ENCODE measurements at regions of chr12 and their contacts with region 1.

Region 1: DNA sequence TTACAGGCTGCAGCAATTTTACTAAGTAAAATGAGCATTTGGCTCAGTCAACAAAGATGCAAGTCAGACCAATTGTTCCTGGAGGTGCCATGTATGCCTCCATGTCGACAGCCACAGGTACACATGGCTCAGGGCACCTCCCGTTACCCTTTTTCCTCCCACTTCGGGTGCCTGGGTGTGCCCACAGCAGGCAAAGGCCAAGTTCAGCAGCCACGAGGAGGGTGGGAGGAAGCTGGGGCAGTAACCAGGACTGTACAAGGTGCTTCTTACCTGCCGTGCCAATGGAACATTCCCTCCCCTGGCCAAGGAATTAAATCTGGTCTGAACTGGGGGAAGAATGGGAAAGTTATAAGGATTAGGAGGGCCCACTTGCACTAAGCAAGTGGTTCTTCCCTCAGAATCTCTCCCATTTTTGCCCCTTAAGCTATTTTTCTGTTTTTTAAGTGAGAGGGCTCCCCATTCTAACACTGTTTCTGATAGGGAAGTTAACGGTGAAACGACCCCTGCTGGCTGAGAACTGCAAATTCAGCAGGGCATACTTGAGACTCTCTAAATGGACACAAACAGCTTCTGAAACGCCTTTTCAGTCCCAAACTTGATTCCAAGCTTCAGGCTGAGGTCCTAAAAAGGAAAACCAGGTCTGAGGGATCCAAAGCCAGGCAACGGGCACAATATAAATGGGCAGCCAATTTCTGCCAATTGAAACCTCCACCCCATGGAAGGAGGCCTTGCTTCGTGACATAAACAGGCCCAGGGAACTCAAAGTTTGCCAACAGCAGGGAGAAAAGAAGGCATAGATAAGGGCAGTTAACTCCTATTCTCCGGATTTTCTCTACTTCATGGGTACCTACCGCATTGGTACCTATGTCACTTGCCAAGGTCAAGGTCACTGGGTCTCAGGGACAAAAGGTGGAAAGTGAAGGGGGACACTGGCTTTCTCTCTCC is 24.8 kb downstream of the CLECL1 start:
- DNase-seq: peak; percentile 72 to 75 (median 74)
- H3K4me3 ChIP-seq: peak overlapping the region; percentile 4 to 29
- H3K4me3 Mint-ChIP-seq: peak overlapping the region; percentile 60 to 82 (median 77)
- H3K27ac ChIP-seq: peak overlapping the region; percentile 66
- H3K27ac Mint-ChIP-seq: peak overlapping the region; percentile 87 to 97 (median 96)
- H3K4me1 ChIP-seq: peaks cover 44% of the 10 kb centered on the region
- H3K4me1 Mint-ChIP-seq: peaks cover 47 to 59% (median 49%) of the 10 kb centered on the region in 4 donors
- H3K27me3 ChIP-seq: no peaks in the 10 kb centered on the region
- H3K27me3 Mint-ChIP-seq: no peaks in the 10 kb centered on the region

Region 2: DNA sequence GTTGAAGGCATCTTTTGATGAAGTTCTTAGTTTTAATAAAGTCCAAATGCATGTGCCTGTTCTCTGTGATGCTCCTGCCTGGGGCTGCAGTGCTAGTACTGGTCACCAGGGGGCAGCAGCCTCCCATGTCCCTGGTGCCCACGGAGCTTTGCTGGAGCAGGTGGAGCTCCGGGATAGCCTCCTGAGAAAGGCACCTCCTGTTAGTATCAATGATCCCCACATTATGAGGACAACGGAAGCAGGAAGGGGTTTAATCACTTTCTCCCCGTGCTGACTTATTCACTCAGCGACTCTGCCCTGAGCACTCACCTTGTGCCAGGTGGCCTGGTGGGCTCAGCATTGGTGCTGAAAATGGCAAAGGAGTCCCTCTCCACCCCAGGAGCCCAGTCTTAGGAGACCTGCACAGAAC is 376.9 kb before region 1 on chr12:
- CTCF ChIA-PET with region 1: interaction called, 15 read pairs
- POLR2A ChIA-PET with region 1: interaction called, 4 read pairs
- intact Hi-C with region 1: loop called (anchors 1 kb)
- DNase-seq: peak in 4 of 5 donors; percentile 54 to 64 (median 61)
- H3K4me3 ChIP-seq: no peak overlapping the region
- H3K4me3 Mint-ChIP-seq: peak overlapping the region in 1 of 8 donors; percentile 45
- H3K27ac ChIP-seq: no peak overlapping the region
- H3K27ac Mint-ChIP-seq: peak overlapping the region in 2 of 7 donors; percentile 37 to 76
- H3K4me1 ChIP-seq: peaks cover 5% of the 10 kb centered on the region
- H3K4me1 Mint-ChIP-seq: peaks cover 5 to 22% (median 10%) of the 10 kb centered on the region in 4 donors
- H3K27me3 ChIP-seq: no peaks in the 10 kb centered on the region
- H3K27me3 Mint-ChIP-seq: no peaks in the 10 kb centered on the region

Region 3: DNA sequence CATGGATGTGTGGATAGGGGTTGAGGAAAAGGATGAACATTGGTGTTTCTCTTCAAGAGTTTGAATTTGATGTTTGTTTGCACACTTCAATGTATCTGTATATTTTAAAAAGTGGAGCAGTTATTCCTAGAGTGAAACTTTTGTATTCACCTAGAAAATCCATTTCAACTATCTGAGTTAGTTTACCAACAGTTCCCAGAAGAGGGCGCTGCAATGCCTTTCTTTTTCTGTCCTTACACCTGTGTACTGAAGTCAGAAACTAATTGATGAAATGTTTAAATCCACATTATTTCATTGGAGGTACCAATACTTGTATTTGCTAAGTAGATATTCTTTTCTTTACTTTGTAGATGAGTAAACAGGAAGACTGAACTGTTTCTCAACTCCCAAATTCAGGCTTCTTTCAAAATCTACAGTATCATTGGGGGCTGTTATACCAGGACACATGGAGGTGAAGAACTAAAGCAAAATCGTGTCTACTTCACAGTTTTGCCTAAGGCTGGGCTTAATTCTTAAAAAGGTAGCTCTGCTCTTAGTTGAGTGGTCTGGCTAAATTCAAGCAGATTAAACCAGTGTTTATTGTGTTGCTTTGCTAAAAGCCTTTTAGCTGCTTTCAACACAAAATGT is 73.8 kb before region 1 on chr12:
- CTCF ChIA-PET with region 1: interaction called, 234 read pairs
- POLR2A ChIA-PET with region 1: interaction called, 77 read pairs
- intact Hi-C with region 1: loop called (anchors 1 kb)
- DNase-seq: peak; percentile 76 to 77 (median 77)
- H3K4me3 ChIP-seq: no peak overlapping the region
- H3K4me3 Mint-ChIP-seq: peak overlapping the region in 6 of 8 donors; percentile 51 to 80 (median 61)
- H3K27ac ChIP-seq: no peak overlapping the region
- H3K27ac Mint-ChIP-seq: peak overlapping the region; percentile 22 to 97 (median 91)
- H3K4me1 ChIP-seq: peaks cover 70% of the 10 kb centered on the region
- H3K4me1 Mint-ChIP-seq: peaks cover 47 to 92% (median 73%) of the 10 kb centered on the region in 4 donors
- H3K27me3 ChIP-seq: no peaks in the 10 kb centered on the region
- H3K27me3 Mint-ChIP-seq: no peaks in the 10 kb centered on the region

Region 4: DNA sequence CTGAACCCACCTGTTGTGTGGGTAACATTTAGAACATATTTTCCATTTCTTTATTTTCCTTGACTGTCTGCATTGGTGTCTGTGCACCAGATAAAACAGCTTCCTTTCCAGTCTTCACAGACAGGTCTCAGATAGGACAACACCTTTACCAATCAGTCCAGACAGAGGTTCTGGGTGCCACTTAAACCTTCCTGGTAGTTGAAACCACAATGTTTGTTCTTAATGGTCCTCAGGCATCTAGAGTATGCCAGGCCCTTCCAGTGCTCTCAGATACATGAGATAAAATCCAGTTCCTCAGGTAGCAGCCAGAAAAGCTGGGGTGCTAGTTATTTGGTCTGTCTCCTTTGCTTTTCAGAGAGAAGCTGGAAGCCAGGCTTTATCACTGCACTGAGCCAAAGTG is 45.6 kb before region 1 on chr12:
- CTCF ChIA-PET with region 1: interaction called, 24 read pairs
- POLR2A ChIA-PET with region 1: interaction called, 69 read pairs
- intact Hi-C with region 1: no loop called
- DNase-seq: no peak
- H3K4me3 ChIP-seq: no peak overlapping the region
- H3K4me3 Mint-ChIP-seq: peak overlapping the region in 7 of 8 donors; percentile 37 to 72 (median 54)
- H3K27ac ChIP-seq: peak overlapping the region; percentile 41
- H3K27ac Mint-ChIP-seq: peak overlapping the region; percentile 68 to 94 (median 85)
- H3K4me1 ChIP-seq: peaks cover 91% of the 10 kb centered on the region
- H3K4me1 Mint-ChIP-seq: peaks cover 65 to 84% (median 76%) of the 10 kb centered on the region in 4 donors
- H3K27me3 ChIP-seq: no peaks in the 10 kb centered on the region
- H3K27me3 Mint-ChIP-seq: no peaks in the 10 kb centered on the region

Region 5: DNA sequence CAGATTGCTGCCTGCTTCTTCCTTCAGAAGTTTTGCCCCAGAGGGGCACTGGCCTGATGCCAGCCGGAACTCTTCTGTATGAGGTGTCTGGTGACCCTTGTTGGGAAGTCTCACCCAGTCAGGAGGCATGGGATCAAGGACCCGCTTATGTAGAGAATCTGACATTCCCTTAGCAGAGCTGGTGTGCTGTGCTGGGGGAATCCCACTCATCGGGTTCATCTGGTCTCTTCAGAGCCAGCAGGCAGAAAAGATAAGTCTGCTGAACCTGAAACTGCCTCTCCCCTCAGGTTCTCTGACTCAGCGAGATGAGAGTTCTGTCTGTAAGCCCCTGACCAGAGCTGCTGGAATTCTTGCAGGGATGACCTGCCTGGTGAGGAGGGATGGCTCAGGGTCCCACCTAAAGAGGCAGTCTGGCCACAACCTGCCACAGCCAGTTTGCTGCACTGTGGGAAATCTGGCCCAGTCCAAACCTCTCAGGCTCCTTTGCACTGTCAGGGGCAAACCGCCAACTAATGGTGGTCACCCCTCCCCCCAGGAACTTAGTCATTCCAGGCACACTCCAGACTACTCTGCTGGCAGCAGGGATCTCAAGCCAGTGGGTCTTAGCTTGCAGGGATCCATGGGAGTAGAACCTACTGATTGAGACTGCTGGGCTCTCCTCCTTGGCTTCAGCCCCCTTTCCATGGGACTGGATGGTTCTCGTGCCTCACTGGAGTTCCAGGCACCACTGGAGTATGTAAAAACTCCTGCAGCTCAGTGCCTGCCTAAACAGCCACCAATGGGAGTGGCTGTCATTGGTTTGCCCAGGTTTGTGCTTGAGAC is 34.5 kb before region 1 on chr12:
- CTCF ChIA-PET with region 1: interaction called, 7 read pairs
- POLR2A ChIA-PET with region 1: interaction called, 182 read pairs
- intact Hi-C with region 1: loop called (anchors 1 kb)
- DNase-seq: peak; percentile 46 to 81 (median 56)
- H3K4me3 ChIP-seq: peak overlapping the region; percentile 32 to 74
- H3K4me3 Mint-ChIP-seq: peak overlapping the region; percentile 87 to 95 (median 94)
- H3K27ac ChIP-seq: peak overlapping the region; percentile 79
- H3K27ac Mint-ChIP-seq: peak overlapping the region; percentile 79 to 98 (median 96)
- H3K4me1 ChIP-seq: peaks cover 72% of the 10 kb centered on the region
- H3K4me1 Mint-ChIP-seq: peaks cover 44 to 89% (median 61%) of the 10 kb centered on the region in 4 donors
- H3K27me3 ChIP-seq: no peaks in the 10 kb centered on the region
- H3K27me3 Mint-ChIP-seq: no peaks in the 10 kb centered on the region

Region 6: GRCh38 chr12:9694241-9694640 is 13.9 kb before region 1 on chr12:
- CTCF ChIA-PET with region 1: interaction called, 32 read pairs
- POLR2A ChIA-PET with region 1: interaction called, 15 read pairs
- intact Hi-C with region 1: no loop called
- DNase-seq: no peak
- H3K4me3 ChIP-seq: no peak overlapping the region
- H3K4me3 Mint-ChIP-seq: no peak overlapping the region
- H3K27ac ChIP-seq: no peak overlapping the region
- H3K27ac Mint-ChIP-seq: peak overlapping the region in 4 of 7 donors; percentile 24 to 48 (median 40)
- H3K4me1 ChIP-seq: peaks cover 23% of the 10 kb centered on the region
- H3K4me1 Mint-ChIP-seq: peaks cover 22 to 54% (median 32%) of the 10 kb centered on the region in 4 donors
- H3K27me3 ChIP-seq: no peaks in the 10 kb centered on the region
- H3K27me3 Mint-ChIP-seq: no peaks in the 10 kb centered on the region

Region 7: DNA sequence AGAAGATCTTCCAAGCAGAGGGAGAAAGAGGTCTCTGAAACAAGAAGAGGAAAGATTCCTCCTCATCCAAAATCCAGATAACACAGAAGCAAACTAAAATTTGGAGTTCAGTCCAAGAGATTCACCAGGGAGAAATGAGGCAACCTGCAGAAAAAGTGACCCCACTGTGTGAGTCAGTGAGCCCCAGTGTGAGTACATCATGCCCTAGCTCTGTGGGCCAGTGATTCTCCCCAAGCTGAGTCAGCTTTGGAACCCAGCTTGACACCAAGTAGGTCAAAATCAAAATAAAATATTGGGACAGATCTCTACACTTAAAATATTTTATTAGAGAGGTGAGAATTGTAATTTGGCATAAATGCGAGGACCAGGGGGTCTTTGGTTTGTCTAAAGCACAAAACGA is 143.8 kb after region 1 on chr12:
- CTCF ChIA-PET with region 1: no interaction called
- POLR2A ChIA-PET with region 1: no interaction called
- intact Hi-C with region 1: no loop called
- DNase-seq: no peak
- H3K4me3 ChIP-seq: no peak overlapping the region
- H3K4me3 Mint-ChIP-seq: no peak overlapping the region
- H3K27ac ChIP-seq: no peak overlapping the region
- H3K27ac Mint-ChIP-seq: peak overlapping the region in 1 of 7 donors; percentile 28
- H3K4me1 ChIP-seq: peaks cover 2% of the 10 kb centered on the region
- H3K4me1 Mint-ChIP-seq: peaks cover 4 to 23% (median 7%) of the 10 kb centered on the region in 4 donors
- H3K27me3 ChIP-seq: no peaks in the 10 kb centered on the region
- H3K27me3 Mint-ChIP-seq: peaks cover 0 to 1% of the 10 kb centered on the region in 2 donors

Region 8: DNA sequence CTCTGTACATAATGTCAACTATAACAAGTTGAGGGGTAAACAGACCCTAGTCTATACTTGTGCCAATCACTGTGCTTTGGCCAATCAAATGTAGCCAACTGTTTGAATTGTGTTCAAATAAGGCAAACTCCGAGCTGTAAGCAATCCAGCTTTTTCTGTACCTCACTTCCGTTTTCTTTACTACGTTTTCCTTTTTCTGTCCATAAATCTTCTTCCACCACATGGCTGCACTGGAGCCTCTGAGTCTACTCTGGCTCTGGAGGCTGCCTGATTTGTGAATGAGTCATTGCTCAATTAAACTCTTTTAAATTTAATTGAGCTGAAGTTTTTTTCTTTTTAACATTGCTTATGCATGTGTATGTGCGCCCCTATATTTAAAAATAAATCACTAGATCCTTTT is 361.0 kb after region 1 on chr12:
- CTCF ChIA-PET with region 1: no interaction called
- POLR2A ChIA-PET with region 1: no interaction called
- intact Hi-C with region 1: no loop called
- DNase-seq: no peak
- H3K4me3 ChIP-seq: no peak overlapping the region
- H3K4me3 Mint-ChIP-seq: no peak overlapping the region
- H3K27ac ChIP-seq: no peak overlapping the region
- H3K27ac Mint-ChIP-seq: no peak overlapping the region
- H3K4me1 ChIP-seq: no peaks in the 10 kb centered on the region
- H3K4me1 Mint-ChIP-seq: no peaks in the 10 kb centered on the region
- H3K27me3 ChIP-seq: no peaks in the 10 kb centered on the region
- H3K27me3 Mint-ChIP-seq: peaks cover 15 to 27% of the 10 kb centered on the region in 2 donors

Measured in CD4-positive, alpha-beta memory T cell (primary cell).